Activated T-helper 1 cell treated with anti-CD3 and anti-CD28 coated beads, Interleukin-12 subunit alpha, Interleukin-12 subunit beta, Interleukin-2, Interleukin-4 antibody, amounts not matched to agents 30 ng/mL and 10 ng/mL and 1 ng/mL, durations not matched to agents 14 hours and 24 hours and 36 hours (primary cell): ENCODE measurements at regions of chr12 and their contacts with region 1.

Region 1: DNA sequence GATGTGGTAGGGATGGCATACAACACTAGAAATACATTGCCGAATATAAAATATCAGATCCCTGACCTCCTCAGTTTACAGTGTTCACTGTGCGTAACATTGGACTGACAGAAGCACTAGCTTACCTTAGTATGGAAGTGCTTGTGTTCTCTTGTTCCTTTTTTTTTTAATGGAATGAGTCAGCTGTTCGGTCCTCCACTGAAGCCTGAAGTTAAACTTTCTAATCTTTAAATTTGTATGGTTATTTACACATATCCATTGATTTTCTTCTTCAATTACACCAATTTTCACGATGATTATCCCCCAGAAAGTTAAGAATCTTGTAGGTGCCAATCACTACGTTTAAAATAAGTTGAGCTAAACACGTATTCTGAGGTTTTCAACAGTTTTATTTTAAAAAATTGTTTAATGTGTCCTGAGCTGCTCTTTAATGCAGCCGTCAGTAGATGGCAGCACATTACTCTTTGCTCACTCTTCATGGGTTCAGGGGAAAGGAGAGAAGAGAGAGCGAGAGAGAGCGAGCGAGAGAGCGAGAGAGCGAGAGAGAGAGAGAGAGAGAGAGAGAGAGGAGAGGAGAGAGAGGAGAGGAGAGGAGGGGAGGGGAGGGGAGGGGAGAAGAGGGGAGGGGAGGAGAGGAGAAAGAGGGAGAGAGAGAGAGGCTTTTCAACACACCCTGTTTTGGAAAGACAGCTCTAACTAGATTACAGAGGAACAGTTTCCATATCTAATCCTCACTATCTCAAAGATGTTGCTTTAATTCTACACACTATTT is 134.7 kb upstream of the SCAF11 start:
- DNase-seq: peak; percentile 42
- H3K4me3 Mint-ChIP-seq: peak overlapping the region; percentile 27
- H3K27ac Mint-ChIP-seq: peak overlapping the region; percentile 75
- H3K4me1 Mint-ChIP-seq: peaks cover 7% of the 10 kb centered on the region
- H3K27me3 Mint-ChIP-seq: peaks cover 36% of the 10 kb centered on the region

Region 2: GRCh38 chr12:46303039-46303666 is 178.1 kb after region 1 on chr12:
- intact Hi-C with region 1: loop called (anchors 1 kb)
- DNase-seq: no peak
- H3K4me3 Mint-ChIP-seq: no peak overlapping the region
- H3K27ac Mint-ChIP-seq: no peak overlapping the region
- H3K4me1 Mint-ChIP-seq: no peaks in the 10 kb centered on the region
- H3K27me3 Mint-ChIP-seq: peaks cover 14% of the 10 kb centered on the region

Region 3: GRCh38 chr12:46675736-46676135 is 550.7 kb after region 1 on chr12:
- intact Hi-C with region 1: loop called (anchors 2 kb)
- DNase-seq: no peak
- H3K4me3 Mint-ChIP-seq: no peak overlapping the region
- H3K27ac Mint-ChIP-seq: no peak overlapping the region
- H3K4me1 Mint-ChIP-seq: peaks cover 7% of the 10 kb centered on the region
- H3K27me3 Mint-ChIP-seq: peaks cover 3% of the 10 kb centered on the region

Region 4: GRCh38 chr12:46983393-46984266 is 858.6 kb after region 1 on chr12:
- intact Hi-C with region 1: loop called (anchors 2 kb)
- DNase-seq: peak; percentile 3
- H3K4me3 Mint-ChIP-seq: no peak overlapping the region
- H3K27ac Mint-ChIP-seq: no peak overlapping the region
- H3K4me1 Mint-ChIP-seq: no peaks in the 10 kb centered on the region
- H3K27me3 Mint-ChIP-seq: peaks cover 8% of the 10 kb centered on the region